Activated CD8-positive, alpha-beta T cell treated with anti-CD3 and anti-CD28 coated beads for 36 hours (primary cell): ENCODE measurements at regions of chr3 and their contacts with region 1.

Region 1: DNA sequence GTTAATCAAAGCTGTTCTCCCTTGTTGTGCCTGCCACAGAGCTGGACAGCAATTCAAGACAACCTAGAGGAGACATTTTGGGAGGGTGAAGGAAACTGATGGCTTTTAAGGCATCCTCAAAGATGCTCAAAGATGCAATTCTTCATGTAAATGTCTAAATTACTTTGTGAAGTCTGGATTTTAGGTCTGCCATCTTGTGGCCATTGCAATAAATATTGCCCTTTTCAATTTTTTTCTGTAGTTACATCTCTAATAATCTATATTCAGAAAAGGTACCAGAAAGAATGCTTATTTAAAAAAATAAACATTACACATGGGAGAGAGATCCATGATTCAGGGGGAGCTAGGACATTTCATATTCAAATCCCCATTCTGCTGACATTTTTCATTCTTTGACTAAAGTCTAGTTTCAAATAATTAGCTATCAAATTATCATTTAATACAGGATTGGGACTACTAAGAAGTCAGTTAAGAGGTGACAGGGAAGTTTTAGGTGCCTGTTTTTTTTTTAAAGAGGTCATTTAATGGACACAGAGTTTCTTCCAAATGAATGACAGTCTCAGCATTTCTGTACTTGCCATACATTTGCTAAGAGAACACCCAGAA is 259.8 kb upstream of the WNT5A start:
- DNase-seq: no peak
- ATAC-seq: no peak
- H3K4me3 Mint-ChIP-seq: no peak overlapping the region
- H3K27ac Mint-ChIP-seq: no peak overlapping the region
- H3K4me1 Mint-ChIP-seq: no peaks in the 10 kb centered on the region
- H3K27me3 Mint-ChIP-seq: no peaks in the 10 kb centered on the region
- CTCF ChIP-seq: peak; percentile 38

Region 2: GRCh38 chr3:55485211-55485791 is 261.6 kb before region 1 on chr3:
- CTCF ChIA-PET with region 1: no interaction called
- POLR2A ChIA-PET with region 1: no interaction called
- intact Hi-C with region 1: loop called (anchors 10 kb)
- DNase-seq: peak; percentile 64
- ATAC-seq: peak; percentile 78
- H3K4me3 Mint-ChIP-seq: no peak overlapping the region
- H3K27ac Mint-ChIP-seq: no peak overlapping the region
- H3K4me1 Mint-ChIP-seq: peaks cover 17% of the 10 kb centered on the region
- H3K27me3 Mint-ChIP-seq: peaks cover 77% of the 10 kb centered on the region
- CTCF ChIP-seq: peak; percentile 51